Activated B cell treated with CpG ODN at 0.5 μM for 24 hours (primary cell): ENCODE measurements at regions of chr22 and their contacts with region 1.

Region 1: DNA sequence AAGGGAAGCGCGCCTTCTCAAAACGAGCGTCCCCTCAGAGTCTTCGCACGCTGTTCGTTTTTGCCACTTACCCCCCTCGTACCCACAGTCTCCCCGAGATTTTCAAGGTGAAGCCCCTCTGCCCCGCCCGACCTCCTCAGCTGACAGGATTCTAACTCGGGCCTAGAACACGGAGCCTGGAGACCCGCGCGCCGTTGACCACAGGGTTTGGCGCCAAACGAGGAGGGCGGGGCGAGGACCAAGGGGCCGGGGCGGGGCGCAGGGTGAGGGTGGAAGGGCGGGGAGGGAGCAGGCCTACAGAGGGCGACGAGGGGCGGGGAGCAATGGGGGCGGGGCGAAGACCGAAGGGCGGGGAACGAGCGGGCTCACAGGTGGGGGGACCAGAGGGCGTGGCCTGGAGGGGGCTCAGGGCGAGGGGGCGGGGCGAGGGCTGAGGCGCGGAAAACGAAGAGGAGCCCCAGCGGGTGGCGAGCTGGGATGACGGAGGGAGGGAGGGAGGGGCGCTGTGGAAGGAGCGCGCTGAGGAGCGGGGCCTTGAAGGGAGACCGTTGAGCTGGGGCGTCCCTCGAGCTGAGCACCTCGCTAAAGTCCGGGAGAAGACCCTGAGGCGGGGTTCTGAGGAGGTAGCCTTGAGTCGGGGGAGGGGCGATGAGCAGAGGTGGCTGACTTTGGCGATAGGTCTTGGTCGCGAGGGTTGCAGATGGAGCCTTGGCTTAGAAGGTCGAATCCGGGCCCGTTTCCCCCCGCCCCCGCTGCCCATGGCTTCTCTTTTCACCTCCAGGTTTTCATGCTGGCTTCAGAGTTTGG is at the start of gene DMC1:
- DNase-seq: peak; percentile 89
- ATAC-seq: peak; percentile 97
- H3K4me3 Mint-ChIP-seq: peak within 1 kb of the TSS; percentile 82
- H3K27ac Mint-ChIP-seq: peak within 1 kb of the TSS; percentile 65
- H3K4me1 Mint-ChIP-seq: peaks cover 17% of the 10 kb centered on the region
- H3K27me3 Mint-ChIP-seq: no peaks in the 10 kb centered on the region
- CTCF ChIP-seq: no peak
- total RNA-seq, gene DMC1: 0.54 and 0.91 TPM in 2 replicates

Region 2: GRCh38 chr22:38051900-38052862 is 518.0 kb before region 1 on chr22:
- CTCF ChIA-PET with region 1: interaction called, 77 read pairs
- POLR2A ChIA-PET with region 1: interaction called, 8 read pairs
- intact Hi-C with region 1: loop called (anchors 1 kb)
- DNase-seq: peak; percentile 75
- ATAC-seq: peak; percentile 87
- H3K4me3 Mint-ChIP-seq: no peak overlapping the region
- H3K27ac Mint-ChIP-seq: no peak overlapping the region
- H3K4me1 Mint-ChIP-seq: peaks cover 14% of the 10 kb centered on the region
- H3K27me3 Mint-ChIP-seq: peaks cover 13% of the 10 kb centered on the region
- CTCF ChIP-seq: peak; percentile 75

Region 3: GRCh38 chr22:38181453-38182247 is 388.5 kb before region 1 on chr22 and contains the start of gene PLA2G6:
- CTCF ChIA-PET with region 1: no interaction called
- POLR2A ChIA-PET with region 1: no interaction called
- intact Hi-C with region 1: loop called (anchors 1 kb)
- DNase-seq: peak; percentile 97
- ATAC-seq: peak; percentile 97
- H3K4me3 Mint-ChIP-seq: peak within 1 kb of the TSS; percentile 92
- H3K27ac Mint-ChIP-seq: peak within 1 kb of the TSS; percentile 85
- H3K4me1 Mint-ChIP-seq: peaks cover 43% of the 10 kb centered on the region
- H3K27me3 Mint-ChIP-seq: peaks cover 4% of the 10 kb centered on the region
- CTCF ChIP-seq: no peak
- total RNA-seq, gene PLA2G6: 53.0 and 64.0 TPM in 2 replicates

Region 4: DNA sequence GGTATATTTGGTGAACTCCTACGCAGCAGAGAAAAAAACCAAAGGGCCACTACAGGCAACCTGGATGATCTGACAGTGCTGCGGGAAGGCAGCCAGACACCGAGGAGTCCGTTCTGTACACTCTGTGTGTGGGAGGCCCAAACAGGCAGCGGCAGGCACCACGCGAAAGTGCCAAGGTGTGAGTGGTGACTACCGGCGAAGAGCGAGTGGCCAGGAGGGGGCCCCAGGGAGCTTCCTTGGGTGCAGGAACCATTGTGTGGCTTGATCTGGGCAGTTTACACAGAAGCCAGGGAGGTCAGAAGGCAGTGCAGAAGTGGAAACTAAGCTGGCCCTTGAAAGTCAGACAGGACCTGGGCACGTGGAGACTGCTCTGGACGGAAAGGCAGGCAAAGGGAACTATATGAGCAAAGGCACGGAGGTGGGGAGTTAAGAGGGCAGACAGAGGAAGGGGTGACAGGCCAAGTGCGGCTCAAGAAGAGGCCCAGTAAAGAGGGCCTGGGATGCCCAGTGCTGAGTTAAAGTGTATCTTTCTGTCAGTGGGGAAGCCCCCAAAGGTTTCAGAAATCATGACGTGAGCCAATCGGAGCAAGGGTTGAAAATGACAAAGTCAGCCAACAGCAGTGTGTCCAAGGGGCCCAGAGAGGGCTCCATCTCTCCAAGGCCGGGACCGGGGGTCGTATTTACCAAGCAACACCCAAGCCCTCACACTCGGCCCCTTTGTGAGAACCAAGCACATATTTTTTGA is 308.0 kb before region 1 on chr22:
- CTCF ChIA-PET with region 1: interaction called, 4 read pairs
- POLR2A ChIA-PET with region 1: no interaction called
- intact Hi-C with region 1: loop called (anchors 1 kb)
- DNase-seq: peak; percentile 34
- ATAC-seq: peak; percentile 38
- H3K4me3 Mint-ChIP-seq: no peak overlapping the region
- H3K27ac Mint-ChIP-seq: peak overlapping the region; percentile 57
- H3K4me1 Mint-ChIP-seq: peaks cover 44% of the 10 kb centered on the region
- H3K27me3 Mint-ChIP-seq: no peaks in the 10 kb centered on the region
- CTCF ChIP-seq: no peak

Region 5: GRCh38 chr22:38398609-38399461 is 171.3 kb before region 1 on chr22:
- CTCF ChIA-PET with region 1: no interaction called
- POLR2A ChIA-PET with region 1: interaction called, 3 read pairs
- intact Hi-C with region 1: loop called (anchors 2 kb)
- DNase-seq: peak; percentile 79
- ATAC-seq: peak; percentile 73
- H3K4me3 Mint-ChIP-seq: peak overlapping the region; percentile 82
- H3K27ac Mint-ChIP-seq: peak overlapping the region; percentile 84
- H3K4me1 Mint-ChIP-seq: peaks cover 37% of the 10 kb centered on the region
- H3K27me3 Mint-ChIP-seq: no peaks in the 10 kb centered on the region
- CTCF ChIP-seq: no peak

Region 6: DNA sequence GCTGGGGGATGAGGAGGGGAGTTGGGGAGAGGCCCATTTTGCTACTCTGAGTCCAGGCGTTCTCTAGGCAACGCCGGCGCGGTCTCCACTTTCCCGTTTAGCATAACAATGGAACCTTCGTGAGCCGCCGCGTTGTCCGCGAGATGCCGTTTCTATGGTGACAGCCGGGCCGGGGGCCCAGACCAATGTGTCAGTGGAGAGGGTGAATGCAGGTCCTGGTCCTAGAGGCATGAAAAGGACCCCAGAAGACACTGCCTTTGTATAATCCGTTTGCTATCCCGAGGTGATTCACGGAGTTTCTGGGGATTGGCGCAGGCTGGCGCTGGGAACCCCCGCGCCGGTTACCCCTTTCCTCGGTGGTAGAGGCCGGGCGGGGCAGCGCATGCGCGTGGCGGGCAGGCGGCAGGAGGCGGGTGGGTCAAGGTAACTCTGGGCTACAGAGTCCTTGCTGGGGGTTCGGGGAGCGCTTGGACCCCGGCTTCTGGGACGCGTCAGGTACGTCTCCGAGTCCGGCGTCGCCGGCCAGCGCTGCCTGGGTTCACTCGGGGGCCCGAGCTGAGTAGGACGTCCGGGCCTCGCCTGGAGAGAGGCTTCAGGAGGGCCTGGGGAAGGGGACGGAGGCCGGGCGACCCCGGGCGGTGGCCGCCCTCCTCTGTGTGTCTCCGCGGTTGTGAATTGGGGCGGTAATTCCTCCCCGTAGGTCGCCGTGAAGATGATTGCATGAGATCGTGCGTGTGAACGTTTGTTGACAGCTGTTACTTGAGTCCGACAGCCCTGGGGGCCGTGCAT is 86.3 kb after region 1 on chr22 and contains the starts of genes CBY1 and FAM227A:
- CTCF ChIA-PET with region 1: no interaction called
- POLR2A ChIA-PET with region 1: no interaction called
- intact Hi-C with region 1: loop called (anchors 5 kb)
- DNase-seq: peak; percentile 91
- ATAC-seq: peak; percentile 84
- H3K4me3 Mint-ChIP-seq: peak within 1 kb of the TSS; percentile 94
- H3K27ac Mint-ChIP-seq: peak within 1 kb of the TSS; percentile 99
- H3K4me1 Mint-ChIP-seq: peaks cover 10% of the 10 kb centered on the region
- H3K27me3 Mint-ChIP-seq: no peaks in the 10 kb centered on the region
- CTCF ChIP-seq: no peak
- total RNA-seq, gene CBY1: 7.3 and 14.1 TPM in 2 replicates
- total RNA-seq, gene FAM227A: 0.20 and 0.66 TPM in 2 replicates